ENCODE measurements at regions of chr1 and their contacts with region 1.

Region 1: DNA sequence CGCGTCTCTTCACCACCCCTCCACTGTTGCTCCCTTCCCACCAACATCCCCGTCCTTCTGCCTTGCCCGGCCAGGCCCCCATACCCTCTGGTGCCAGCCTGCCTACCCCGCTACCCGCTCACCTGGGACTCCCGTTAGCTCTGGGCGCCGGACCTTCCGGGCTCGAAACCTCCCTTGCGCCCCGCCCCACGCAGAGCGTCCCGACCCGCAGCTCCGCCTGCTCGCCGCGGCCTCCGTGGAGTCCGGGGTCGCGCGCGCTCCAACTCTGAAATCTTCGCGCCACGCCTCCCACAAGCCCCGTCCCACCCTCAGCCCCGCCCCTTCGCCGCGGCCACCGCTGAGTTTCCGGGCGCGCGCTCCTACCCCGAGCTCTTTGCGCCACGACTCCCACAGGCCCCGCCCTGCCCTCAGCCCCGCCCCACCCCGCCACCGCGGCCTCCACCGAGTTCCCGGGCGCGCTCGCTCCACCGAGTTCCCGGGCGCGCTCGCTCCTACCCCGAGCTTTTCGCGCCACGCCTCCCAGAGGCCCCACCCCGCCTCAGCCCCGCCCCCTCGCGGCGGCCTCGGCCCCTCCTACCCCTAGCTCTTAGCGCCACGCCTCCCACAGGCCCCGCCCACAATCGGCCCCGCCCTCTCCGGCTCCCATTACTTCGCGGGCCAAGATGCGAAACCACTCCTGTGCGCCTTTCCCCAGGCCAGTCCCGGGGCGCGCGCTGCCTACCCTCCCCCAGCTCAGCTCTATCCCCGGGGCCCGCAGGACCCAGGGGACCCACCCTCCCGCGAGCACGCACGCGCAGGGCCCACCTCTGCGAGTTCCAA is at the start of gene IFT25:
- DNase-seq: peak; percentile 95 to 98
- H3K4me3 ChIP-seq: peak within 1 kb of the TSS; percentile 81 to 86
- H3K27ac ChIP-seq: peak within 1 kb of the TSS; percentile 90 to 93
- H3K4me1 ChIP-seq: peaks cover 4 to 44% (median 27%) of the 10 kb centered on the region in 4 donors
- H3K27me3 ChIP-seq: no peaks in the 10 kb centered on the region
- CTCF ChIP-seq: no peak

Region 2: GRCh38 chr1:53889304-53890298 is 56.0 kb before region 1 on chr1 and contains the start of gene YIPF1:
- intact Hi-C with region 1: loop called (anchors 2 kb)
- DNase-seq: peak; percentile 89 to 95
- H3K4me3 ChIP-seq: peak within 1 kb of the TSS; percentile 66 to 94
- H3K27ac ChIP-seq: peak within 1 kb of the TSS; percentile 67 to 82
- H3K4me1 ChIP-seq: peaks cover 0 to 17% (median 11%) of the 10 kb centered on the region in 4 donors
- H3K27me3 ChIP-seq: no peaks in the 10 kb centered on the region
- CTCF ChIP-seq: no peak

Region 3: DNA sequence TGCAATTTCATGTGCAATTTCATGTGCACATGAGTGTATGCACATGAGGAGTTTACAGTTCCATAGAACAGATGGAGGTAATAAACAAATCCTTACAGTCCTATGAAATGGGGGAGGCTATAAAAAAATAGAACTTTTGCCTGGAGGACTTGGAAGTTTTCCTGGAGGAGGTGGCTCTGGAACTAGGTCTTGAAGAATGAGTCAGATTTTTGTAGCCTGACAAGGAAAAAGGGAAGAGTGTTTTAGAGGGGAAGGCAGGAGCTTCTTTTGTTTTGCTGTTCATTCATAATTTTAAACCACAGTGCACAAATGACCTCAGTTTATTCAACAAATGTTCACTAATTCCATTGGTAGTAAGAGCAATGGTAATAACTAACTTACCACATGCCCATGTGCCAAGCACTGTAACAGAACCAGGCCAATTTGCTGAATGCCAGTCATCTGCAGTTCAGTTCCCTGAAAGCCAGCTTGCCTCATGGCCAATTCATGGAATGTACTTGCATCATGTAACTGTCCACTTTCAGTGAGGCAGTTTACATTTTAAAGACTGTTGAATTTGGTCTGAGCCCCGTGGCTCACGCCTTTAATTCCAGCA is 48.9 kb before region 1 on chr1:
- intact Hi-C with region 1: loop called (anchors 2 kb)
- DNase-seq: peak; percentile 27 to 77
- H3K4me3 ChIP-seq: no peak overlapping the region
- H3K27ac ChIP-seq: peak overlapping the region; percentile 40 to 71
- H3K4me1 ChIP-seq: peaks cover 0 to 48% (median 38%) of the 10 kb centered on the region in 4 donors
- H3K27me3 ChIP-seq: no peaks in the 10 kb centered on the region
- CTCF ChIP-seq: no peak

Region 4: DNA sequence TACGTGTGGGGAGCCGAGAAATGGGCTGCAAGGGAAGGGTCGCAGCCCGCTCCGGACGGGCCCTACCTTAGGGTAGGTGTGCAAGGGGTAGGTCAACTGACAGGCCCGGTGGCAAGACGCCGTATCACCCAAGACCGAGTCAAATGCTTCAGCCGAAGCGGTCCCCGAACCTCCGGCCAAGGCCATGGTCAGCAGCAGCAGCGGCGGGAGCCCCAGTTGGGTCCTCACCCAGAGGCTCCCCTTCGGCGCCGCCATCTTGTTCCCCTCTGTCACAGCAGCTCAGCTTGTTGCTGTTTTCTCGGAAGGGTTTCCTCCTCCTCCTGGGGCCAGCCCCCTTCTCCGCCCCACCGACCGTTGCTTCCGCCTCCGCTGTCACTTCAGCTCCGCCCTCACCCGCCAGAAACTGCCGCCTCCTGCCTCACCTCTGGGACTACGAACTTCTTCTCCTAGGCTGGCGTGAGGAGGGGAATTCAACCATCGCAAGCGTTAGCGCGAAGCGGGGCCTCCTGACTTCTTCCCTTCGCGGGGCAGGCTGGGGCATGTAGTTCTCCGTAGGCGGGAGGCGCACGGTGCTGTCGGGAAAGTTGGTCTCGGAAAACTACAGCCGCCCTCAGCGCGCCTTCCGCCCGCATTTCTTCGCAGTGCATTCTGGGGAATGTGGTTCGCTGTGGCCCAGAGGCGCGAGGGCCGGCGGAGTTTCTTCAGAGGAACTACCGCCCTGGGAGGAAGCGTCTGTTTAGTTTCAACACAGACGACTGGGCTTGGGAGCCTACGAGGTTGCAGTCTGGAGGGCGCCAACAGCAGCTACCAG is 107.5 kb after region 1 on chr1 and contains the starts of genes TCEANC2 and TMEM59:
- intact Hi-C with region 1: loop called (anchors 1 kb)
- DNase-seq: peak; percentile 99
- H3K4me3 ChIP-seq: peak within 1 kb of the TSS; percentile 77 to 97
- H3K27ac ChIP-seq: peak within 1 kb of the TSS; percentile 91 to 99
- H3K4me1 ChIP-seq: peaks cover 0 to 53% (median 28%) of the 10 kb centered on the region in 4 donors
- H3K27me3 ChIP-seq: no peaks in the 10 kb centered on the region
- CTCF ChIP-seq: peak in 1 of 2 experiments; percentile 22